Dorsolateral prefrontal cortex (tissue), 120 donors: ENCODE measurements at regions of chr20 and their contacts with region 1.

Region 1: DNA sequence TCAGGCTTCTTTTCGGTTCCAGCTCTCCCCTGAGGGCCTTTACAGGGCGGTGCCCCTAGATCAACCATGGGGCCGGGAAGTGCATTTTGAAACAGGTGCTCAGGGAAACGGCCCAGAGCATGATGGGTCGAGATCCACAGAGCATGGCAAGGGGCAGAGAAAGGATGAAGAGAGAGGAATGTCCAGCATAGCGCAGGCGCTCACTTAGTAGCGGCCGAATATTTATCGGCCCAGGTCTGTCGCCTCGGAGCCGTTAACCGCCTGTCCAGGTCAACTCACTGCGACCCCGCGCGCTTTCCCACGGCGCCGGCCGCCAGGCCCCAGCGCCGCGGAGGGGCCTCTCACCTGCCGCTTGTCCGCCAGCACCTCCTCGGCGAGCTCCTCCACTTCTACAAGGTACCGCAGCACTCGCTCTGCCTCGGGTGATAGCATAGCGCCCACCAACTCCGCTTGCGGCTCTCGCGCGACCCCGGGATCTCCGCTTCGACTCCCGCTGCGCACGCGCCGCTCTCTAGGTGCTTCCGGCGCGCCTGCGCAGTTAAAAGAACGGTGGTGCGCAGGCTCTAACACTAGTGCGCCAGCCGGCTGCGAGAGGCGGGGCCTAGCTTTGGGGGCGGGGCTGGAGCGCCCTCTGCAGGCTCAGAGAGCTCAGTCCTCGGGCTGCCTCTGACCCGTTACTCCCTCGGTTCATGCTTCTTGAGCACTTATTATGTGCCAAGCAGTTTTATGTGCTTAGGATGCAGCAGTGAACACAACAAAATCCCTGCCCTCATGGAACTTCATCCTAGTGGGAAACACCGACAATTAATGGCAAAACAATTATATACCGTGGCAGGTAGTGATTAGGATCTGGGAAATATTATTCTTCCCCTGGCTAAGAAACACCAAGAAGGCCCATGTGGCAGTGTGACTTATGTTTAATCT is at the start of gene PDRG1:
- DNase-seq: peak; percentile 80 to 95 (median 88)
- H3K4me3 ChIP-seq: peak within 1 kb of the TSS; percentile 75 to 100 (median 97)
- H3K27ac ChIP-seq: peak within 1 kb of the TSS in 50 of 59 donors; percentile 4 to 92 (median 76)
- H3K27me3 ChIP-seq: peaks cover 0 to 6% (median 0%) of the 10 kb centered on the region in 45 donors
- CTCF ChIP-seq: peak; percentile 97 to 100 (median 100)
- total RNA-seq, gene PDRG1: 10.2 to 19.6 (median 13.1) TPM

Region 2: GRCh38 chr20:31661625-31662371 is 290.0 kb before region 1 on chr20:
- intact Hi-C with region 1: loop called in 1 of 2 experiments (anchors 5 kb)
- DNase-seq: peak; percentile 77 to 86 (median 81)
- H3K4me3 ChIP-seq: peak overlapping the region; percentile 14 to 69 (median 56)
- H3K27ac ChIP-seq: peak overlapping the region; percentile 70 to 100 (median 92)
- H3K27me3 ChIP-seq: no peaks in the 10 kb centered on the region
- CTCF ChIP-seq: peak; percentile 72 to 96 (median 90)

Region 3: DNA sequence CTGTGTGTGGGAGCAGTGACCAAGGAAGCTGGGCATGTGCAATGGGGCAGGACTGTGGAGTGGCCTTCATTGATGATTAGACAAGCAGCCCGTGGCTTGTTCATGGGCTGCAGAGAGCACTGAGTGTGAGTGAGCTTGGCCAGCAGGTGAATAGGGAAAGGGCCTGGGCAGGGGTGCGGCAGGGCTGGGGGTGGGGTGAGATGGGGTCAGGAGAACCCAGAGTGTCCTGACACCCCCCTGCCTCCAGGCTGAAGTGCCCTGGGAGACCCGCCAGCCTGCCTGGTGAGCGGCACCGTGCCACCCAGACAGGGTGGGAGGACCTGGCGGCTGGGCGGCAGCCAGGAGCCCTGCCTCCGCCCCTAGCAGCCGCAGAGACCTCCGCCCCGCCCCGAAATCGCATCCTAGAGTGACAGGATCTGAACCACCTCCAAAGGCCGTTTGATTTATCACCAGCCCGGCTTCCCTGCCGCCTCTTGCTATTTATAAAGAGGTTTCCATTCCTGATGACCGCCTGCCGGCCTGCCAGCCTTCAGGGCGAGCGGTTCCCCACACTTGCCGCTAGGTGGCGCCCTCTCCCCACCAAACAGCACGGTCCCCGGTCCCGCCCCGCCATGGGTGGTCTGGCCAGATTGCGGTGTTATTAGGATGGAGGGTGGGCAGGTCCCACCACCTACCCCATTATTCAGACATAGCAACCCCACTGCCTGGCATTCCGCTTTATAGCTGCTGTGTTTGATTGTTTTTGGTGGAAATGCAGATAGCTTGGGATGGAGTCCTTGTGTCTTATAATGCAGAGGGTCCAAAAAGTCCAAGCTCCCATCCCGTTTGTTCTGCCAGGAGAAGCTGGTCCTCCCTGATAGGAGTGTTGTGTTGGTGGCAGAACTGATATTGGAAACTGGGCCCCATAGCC is 129.1 kb before region 1 on chr20:
- intact Hi-C with region 1: loop called (anchors 2 to 10 kb)
- DNase-seq: peak; percentile 53 to 91 (median 66)
- H3K4me3 ChIP-seq: peak overlapping the region in 52 of 59 donors; percentile 8 to 62 (median 43)
- H3K27ac ChIP-seq: peak overlapping the region in 6 of 59 donors; percentile 13 to 65 (median 42)
- H3K27me3 ChIP-seq: peaks cover 0 to 3% (median 0%) of the 10 kb centered on the region in 45 donors
- CTCF ChIP-seq: peak; percentile 85 to 100 (median 99)

Region 4: DNA sequence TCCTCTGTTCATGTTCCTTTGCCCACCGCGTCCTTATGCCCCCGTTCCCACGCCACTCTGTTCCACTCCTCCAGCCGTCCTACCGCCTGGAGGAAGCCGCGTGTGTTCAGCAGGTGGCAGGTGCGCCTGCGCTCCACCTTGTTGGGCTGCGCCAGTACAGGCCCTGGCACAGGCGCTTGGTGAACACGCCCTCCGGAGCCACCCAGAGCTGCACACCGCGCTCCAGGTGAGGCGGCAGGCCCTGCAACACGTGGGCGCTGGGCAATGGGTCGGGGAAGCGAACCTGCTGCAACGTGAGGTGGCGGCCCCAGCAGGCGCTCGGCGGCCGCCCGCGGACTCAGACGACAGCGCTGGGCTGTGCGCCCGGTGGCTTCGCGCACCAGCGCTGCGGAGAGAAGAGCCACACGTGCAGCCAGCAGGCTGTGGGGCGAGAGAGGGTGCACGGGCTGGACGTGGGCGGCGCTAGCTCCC is 102.3 kb before region 1 on chr20:
- intact Hi-C with region 1: loop called (anchors 1 kb)
- DNase-seq: no peak
- H3K4me3 ChIP-seq: no peak overlapping the region
- H3K27ac ChIP-seq: no peak overlapping the region
- H3K27me3 ChIP-seq: peaks cover 0 to 44% (median 15%) of the 10 kb centered on the region in 45 donors
- CTCF ChIP-seq: no peak

Region 5: GRCh38 chr20:31881945-31882344 is 69.8 kb before region 1 on chr20:
- intact Hi-C with region 1: loop called in 1 of 2 experiments (anchors 2 kb)
- DNase-seq: no peak
- H3K4me3 ChIP-seq: no peak overlapping the region
- H3K27ac ChIP-seq: no peak overlapping the region
- H3K27me3 ChIP-seq: no peaks in the 10 kb centered on the region
- CTCF ChIP-seq: no peak

Region 6: GRCh38 chr20:32018269-32019074 is 66.7 kb after region 1 on chr20:
- intact Hi-C with region 1: loop called in 1 of 2 experiments (anchors 10 kb)
- DNase-seq: peak in 1 of 10 donors; percentile 68
- H3K4me3 ChIP-seq: peak overlapping the region; percentile 7 to 70 (median 49)
- H3K27ac ChIP-seq: peak overlapping the region in 6 of 59 donors; percentile 5 to 63 (median 29)
- H3K27me3 ChIP-seq: peaks cover 0 to 58% (median 17%) of the 10 kb centered on the region in 45 donors
- CTCF ChIP-seq: no peak

Region 7: GRCh38 chr20:32109392-32110172 is 157.8 kb after region 1 on chr20 and contains the start of gene TM9SF4:
- intact Hi-C with region 1: loop called (anchors 2 to 5 kb)
- DNase-seq: peak; percentile 89 to 95 (median 92)
- H3K4me3 ChIP-seq: peak within 1 kb of the TSS; percentile 63 to 100 (median 95)
- H3K27ac ChIP-seq: peak within 1 kb of the TSS; percentile 84 to 100 (median 99)
- H3K27me3 ChIP-seq: no peaks in the 10 kb centered on the region
- CTCF ChIP-seq: peak in 30 of 56 donors; percentile 1 to 55 (median 23)
- total RNA-seq, gene TM9SF4: 45.6 to 73.7 (median 60.7) TPM

Region 8: GRCh38 chr20:32240220-32240619 is 288.4 kb after region 1 on chr20:
- intact Hi-C with region 1: no loop called
- DNase-seq: no peak
- H3K4me3 ChIP-seq: no peak overlapping the region
- H3K27ac ChIP-seq: no peak overlapping the region
- H3K27me3 ChIP-seq: no peaks in the 10 kb centered on the region
- CTCF ChIP-seq: no peak